Dorsolateral prefrontal cortex (tissue), 120 donors: ENCODE measurements at regions of chr7 and their contacts with region 1.

Region 1: DNA sequence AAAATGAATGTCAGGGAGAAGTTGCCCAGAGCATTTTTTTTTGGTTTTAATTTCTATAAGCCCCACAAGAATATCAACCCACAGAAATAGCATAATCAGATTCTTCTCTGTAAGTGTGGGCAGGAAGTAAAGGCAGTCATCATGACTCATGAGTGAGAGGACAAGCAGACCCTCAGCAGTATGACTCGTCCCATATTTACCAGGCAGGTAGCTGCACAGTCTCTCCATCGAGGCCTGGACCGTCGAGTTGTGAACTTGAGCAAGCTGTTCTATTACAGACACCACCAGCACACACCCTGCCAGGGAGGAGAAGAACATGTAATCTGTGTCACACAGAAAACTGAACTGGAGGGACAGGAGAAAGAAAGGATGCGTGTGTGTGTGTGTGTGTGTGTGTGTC is 37.8 kb downstream of the AOAH start:
- DNase-seq: peak in 4 of 10 donors; percentile 8 to 70 (median 38)
- H3K4me3 ChIP-seq: no peak overlapping the region
- H3K27ac ChIP-seq: no peak overlapping the region
- H3K27me3 ChIP-seq: no peaks in the 10 kb centered on the region
- CTCF ChIP-seq: no peak

Region 2: DNA sequence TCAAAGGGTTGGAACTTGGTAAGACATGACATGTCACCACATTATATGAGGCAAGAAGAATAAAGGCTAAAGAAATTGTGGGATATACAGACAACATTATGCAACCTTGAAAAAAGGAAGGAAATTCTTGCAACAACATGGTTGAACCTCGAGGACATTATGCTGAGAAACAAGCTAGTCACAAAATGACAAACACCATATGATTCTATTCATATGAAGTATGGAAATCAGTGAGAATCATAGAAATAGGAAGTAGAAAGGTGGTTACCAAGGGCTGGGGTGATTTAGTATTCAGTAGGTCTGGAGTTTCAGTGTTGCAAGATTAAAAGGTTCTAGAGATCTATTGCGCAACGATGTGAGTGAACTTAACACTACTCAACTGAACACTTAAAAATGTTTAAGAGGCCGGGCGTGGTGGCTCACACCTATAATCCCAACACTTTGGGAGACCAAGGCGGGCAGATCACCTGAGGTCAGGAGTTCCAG is 1305.7 kb before region 1 on chr7:
- intact Hi-C with region 1: no loop called
- DNase-seq: no peak
- H3K4me3 ChIP-seq: no peak overlapping the region
- H3K27ac ChIP-seq: no peak overlapping the region
- H3K27me3 ChIP-seq: peaks cover 0 to 10% (median 0%) of the 10 kb centered on the region in 45 donors
- CTCF ChIP-seq: no peak

Region 3: DNA sequence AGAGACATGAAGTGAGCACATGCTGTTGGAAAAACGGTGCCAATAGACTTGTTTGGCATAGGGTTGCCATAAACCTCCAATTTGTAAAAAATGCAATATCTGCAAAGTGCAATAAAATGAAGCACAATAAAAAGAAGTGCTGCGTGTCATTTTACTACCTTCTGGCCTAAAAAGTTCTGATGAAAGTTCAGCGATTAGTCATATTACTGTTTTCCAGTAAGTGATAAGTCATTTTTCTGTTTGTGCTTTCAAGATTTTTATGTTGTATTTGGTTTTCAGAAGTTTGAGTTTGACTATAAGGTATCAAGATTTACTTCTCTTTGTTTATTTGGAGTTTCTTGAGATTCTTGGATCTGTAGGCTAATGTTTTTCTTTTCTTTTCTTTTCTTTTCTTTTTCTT is 21.0 kb after region 1 on chr7:
- intact Hi-C with region 1: no loop called
- DNase-seq: no peak
- H3K4me3 ChIP-seq: no peak overlapping the region
- H3K27ac ChIP-seq: no peak overlapping the region
- H3K27me3 ChIP-seq: no peaks in the 10 kb centered on the region
- CTCF ChIP-seq: no peak

Region 4: DNA sequence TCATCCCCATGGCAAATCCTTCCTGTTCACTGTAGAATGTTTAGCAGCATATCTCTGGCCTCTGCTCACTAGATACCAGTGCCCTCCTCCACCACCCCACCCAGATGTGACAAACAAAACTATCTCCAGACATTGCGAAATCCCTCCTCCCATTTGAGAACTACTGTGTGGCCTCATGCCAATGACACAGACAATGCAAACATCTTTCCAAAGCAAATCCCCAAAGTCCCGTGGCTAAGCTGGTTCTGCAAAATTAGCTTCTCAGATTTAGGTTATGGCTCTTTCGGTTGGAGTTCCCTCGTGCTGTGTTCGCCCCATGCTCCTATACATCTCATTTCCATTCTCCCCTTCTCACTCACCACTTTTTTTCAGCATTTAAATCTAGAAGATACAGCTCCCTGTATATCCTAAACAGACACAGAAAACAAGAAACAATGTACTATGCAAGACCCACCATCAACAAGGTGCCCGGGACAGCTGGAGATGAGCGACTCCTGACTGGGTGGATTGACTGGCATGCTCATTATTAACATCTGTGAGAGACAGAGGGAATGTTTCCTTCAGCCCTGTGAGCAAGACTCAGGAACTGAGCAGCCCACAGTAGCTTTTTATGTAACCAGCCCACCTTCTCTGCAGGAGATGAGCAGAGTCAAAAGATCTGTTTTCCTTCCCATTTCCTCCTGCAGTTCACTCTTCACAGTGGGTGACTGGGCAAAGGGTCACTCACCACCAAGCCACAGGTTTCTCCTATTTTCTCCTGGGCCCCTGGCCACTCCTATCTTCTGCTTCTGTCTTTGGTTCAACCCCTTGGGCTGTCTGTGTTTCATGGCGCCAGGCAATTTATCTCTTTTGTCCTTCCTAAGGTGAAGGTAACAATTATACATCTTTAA is 263.5 kb after region 1 on chr7:
- intact Hi-C with region 1: loop called in 1 of 2 experiments (anchors 10 kb)
- DNase-seq: no peak
- H3K4me3 ChIP-seq: no peak overlapping the region
- H3K27ac ChIP-seq: peak overlapping the region in 55 of 59 donors; percentile 3 to 76 (median 55)
- H3K27me3 ChIP-seq: no peaks in the 10 kb centered on the region
- CTCF ChIP-seq: no peak